Activated CD8-positive, alpha-beta T cell treated with anti-CD3 and anti-CD28 coated beads for 36 hours (primary cell): ENCODE measurements at regions of chr12 and their contacts with region 1.

Region 1: GRCh38 chr12:42372154-42372791 is 46.3 kb downstream of the PPHLN1 start:
- DNase-seq: peak; percentile 19
- ATAC-seq: peak; percentile 99
- H3K4me3 Mint-ChIP-seq: no peak overlapping the region
- H3K27ac Mint-ChIP-seq: no peak overlapping the region
- H3K4me1 Mint-ChIP-seq: peaks cover 7% of the 10 kb centered on the region
- H3K27me3 Mint-ChIP-seq: no peaks in the 10 kb centered on the region
- CTCF ChIP-seq: peak; percentile 78

Region 2: DNA sequence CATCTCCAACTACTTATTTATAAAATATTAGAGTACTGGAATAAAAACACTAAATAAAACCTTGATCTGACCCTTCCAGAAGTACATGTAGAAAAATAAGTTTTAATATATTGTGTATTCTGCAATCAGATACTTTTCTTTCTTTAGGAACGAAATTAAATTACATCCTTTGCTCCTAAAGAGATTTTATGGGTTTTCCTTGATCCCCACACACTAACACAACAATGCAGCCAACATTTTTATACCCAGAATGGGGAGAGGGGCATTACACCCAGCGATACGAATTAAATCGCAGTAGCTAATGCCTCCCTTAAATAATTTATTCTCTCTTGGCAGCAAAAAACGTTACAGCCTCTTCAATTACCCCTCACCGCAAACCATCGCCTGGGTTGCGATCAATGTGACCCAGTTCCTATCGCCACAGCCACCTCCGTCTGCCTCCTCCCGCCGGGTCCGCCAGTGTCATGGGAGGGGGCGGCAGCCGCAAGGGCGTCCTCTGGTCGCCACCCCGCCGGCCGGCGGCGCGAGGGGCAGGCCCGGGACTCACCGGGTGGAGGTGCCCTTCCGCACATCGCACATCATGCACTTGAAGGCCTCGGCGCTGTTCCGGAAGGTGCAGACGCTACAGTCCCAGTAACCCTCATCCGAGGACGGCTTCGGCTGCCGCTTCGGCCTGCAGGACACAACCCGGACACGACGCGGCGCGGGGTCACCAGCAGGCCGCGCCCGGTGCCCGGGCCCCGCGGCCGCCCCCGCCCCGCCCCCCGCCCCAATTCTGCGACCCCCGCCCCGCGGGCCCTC is 135.0 kb before region 1 on chr12:
- CTCF ChIA-PET with region 1: interaction called, 11 read pairs
- POLR2A ChIA-PET with region 1: no interaction called
- intact Hi-C with region 1: no loop called
- DNase-seq: peak; percentile 84
- ATAC-seq: peak; percentile 86
- H3K4me3 Mint-ChIP-seq: peak overlapping the region; percentile 92
- H3K27ac Mint-ChIP-seq: peak overlapping the region; percentile 91
- H3K4me1 Mint-ChIP-seq: peaks cover 38% of the 10 kb centered on the region
- H3K27me3 Mint-ChIP-seq: no peaks in the 10 kb centered on the region
- CTCF ChIP-seq: peak; percentile 42

Region 3: DNA sequence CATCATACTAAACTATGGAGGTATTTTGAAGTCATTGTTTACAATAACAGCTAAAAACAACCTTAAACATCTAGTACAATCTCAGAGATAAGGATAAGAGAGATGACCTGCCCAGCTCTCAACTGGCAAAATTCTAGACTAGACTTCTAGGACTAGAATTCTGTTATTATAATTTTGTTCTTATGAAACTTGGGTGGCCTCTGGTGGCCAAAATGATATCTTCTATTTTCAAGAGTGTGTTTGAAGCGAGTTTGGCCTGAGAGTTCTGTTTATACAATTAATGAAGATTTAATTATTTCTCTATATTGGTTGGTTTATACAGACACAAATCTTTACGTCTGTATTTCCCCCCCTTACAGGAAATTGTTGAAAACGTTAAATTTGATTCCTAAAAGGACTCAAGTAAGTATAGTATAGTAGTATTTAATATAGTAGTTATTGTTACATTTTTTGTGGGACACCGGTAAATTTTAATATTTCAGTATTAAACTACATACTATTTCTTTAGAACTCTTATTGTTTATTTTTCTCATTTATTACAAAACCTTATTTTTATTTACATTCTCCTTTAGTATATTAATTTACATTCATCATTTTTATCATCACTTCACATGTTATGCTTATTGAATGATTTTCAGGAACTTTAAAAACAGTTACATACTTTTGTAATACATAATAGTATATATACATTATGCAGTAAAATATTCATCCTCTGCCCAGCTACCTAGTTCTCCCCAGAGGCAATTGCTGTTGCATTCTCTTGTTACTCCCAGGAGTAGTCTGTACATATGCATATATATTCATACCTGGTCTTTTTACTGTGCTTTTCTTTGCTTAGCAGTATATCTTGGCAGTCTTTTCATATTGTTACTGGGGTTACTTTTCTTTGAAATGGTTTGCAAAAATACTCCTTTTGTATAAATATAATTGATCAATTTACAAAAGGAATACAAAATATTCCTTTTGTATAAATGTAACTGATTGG is 39.7 kb before region 1 on chr12:
- CTCF ChIA-PET with region 1: interaction called, 20 read pairs
- POLR2A ChIA-PET with region 1: no interaction called
- intact Hi-C with region 1: no loop called
- DNase-seq: peak; percentile 55
- ATAC-seq: peak; percentile 71
- H3K4me3 Mint-ChIP-seq: no peak overlapping the region
- H3K27ac Mint-ChIP-seq: no peak overlapping the region
- H3K4me1 Mint-ChIP-seq: peaks cover 58% of the 10 kb centered on the region
- H3K27me3 Mint-ChIP-seq: no peaks in the 10 kb centered on the region
- CTCF ChIP-seq: peak; percentile 81

Region 4: DNA sequence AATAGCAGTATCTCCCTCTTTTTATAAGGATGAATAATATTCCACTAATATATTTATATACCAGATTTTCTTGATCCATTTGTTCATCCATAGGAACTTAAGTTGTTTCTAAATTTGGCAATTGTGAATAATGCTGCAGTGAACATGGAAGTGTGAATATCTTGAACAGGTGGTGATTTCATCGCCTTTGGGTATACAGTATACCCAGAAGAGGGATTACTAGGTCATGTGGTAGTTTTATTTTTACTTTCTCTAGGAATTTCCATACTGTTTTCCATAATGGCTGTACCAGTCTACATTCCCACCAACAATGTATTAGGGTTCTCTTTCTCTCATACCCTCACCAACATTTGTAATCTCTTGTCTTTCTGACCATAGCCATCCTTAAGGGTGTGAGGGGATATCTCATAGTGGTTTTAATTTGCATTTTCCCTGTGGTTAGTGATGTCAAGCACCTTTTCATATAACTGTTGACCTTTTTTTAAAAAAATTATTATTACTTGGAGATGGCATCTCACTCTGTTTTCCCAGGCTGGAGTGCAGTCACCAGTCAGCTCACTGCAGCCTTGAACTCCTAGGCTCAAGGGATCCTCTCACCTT is 25.8 kb before region 1 on chr12:
- CTCF ChIA-PET with region 1: interaction called, 11 read pairs
- POLR2A ChIA-PET with region 1: no interaction called
- intact Hi-C with region 1: no loop called
- DNase-seq: no peak
- ATAC-seq: peak; percentile 20
- H3K4me3 Mint-ChIP-seq: no peak overlapping the region
- H3K27ac Mint-ChIP-seq: no peak overlapping the region
- H3K4me1 Mint-ChIP-seq: peaks cover 39% of the 10 kb centered on the region
- H3K27me3 Mint-ChIP-seq: no peaks in the 10 kb centered on the region
- CTCF ChIP-seq: no peak

Region 5: DNA sequence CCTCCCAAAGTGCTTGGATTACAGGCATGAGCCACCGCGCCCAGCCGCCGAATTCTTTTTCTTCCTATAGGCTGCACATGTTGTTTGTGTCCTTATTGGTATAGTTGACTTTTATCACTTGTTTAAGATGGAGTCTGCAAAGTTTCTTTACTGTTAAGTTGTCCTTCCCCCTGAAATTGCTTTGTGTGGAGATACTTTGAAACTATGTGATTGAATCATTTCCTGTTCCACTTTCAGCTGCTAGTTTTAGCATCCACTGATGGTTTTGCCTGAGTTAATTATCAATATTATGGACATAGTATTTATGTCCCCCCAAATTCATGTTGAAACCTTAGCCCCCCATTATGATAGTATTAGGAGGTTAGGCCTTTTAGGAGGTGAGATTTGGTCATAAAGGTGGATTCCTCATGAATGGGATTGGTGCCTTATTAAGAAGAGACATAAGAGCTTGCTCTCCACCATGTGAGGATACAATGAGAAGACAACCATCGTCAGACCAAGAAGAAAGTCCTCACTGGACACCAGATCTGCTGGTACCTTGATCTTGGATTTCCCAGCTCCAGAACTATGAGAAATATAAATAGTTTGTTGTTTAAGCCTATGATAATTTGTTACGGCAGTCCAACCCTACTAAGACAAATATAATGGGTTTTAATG is 11.4 kb before region 1 on chr12:
- CTCF ChIA-PET with region 1: interaction called, 10 read pairs
- POLR2A ChIA-PET with region 1: no interaction called
- intact Hi-C with region 1: no loop called
- DNase-seq: peak; percentile 8
- ATAC-seq: peak; percentile 73
- H3K4me3 Mint-ChIP-seq: peak overlapping the region; percentile 16
- H3K27ac Mint-ChIP-seq: peak overlapping the region; percentile 85
- H3K4me1 Mint-ChIP-seq: peaks cover 48% of the 10 kb centered on the region
- H3K27me3 Mint-ChIP-seq: no peaks in the 10 kb centered on the region
- CTCF ChIP-seq: no peak